ENCODE measurements at regions of chr20 and their contacts with region 1.

Region 1: DNA sequence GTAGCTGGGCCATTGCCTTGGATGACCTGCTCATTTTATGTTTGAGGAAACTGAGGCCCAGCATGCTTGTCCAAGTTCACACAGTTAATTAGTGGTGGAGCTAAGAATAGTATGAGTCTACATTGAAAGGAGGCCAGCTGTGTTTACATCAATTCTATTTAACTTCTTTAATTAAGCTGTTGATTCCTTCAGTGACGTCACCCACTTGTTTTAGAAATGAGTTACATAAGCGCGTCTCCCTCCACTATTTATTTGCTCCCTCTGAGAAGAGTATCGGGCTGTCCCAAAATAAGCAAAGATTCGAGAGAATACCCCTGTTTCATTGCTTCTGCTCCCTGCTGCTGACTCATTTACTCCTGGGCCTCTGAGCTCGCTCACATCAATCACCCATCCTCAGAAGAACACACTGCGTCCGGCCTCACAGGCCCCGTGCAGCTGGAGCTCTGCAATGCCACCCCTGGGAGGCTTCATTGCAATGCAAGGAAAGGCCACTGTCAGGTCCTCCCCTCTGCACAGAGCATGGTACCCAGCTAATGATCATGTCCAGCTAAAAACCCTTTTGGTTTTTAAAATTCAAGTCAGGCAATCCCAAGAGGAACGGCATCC is 74.8 kb upstream of the BMP2 start:
- DNase-seq: no peak
- H3K4me3 ChIP-seq: no peak overlapping the region
- H3K27ac ChIP-seq: no peak overlapping the region
- H3K27me3 ChIP-seq: no peaks in the 10 kb centered on the region
- CTCF ChIP-seq: no peak

Region 2: DNA sequence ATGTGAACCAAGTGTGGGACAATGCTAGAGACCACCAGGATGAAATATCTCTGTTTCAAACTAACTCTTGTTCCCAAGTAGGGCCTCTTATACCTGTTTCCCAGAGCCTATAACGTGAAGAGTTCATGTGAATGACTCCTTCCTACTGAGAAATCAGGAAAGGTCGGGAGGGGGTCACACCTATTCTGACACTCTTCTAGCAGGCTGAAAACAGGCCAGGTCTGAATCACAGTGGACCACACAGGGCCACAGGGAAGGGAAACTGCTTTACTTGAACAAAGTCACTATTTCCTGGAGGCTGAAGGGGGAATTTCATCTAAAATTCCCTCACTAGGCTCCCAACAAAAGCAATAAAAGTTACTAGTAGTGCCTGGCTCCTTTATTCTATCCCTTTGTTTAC is 13.6 kb before region 1 on chr20:
- CTCF ChIA-PET with region 1: no interaction called
- POLR2A ChIA-PET with region 1: no interaction called
- DNase-seq: no peak
- H3K4me3 ChIP-seq: no peak overlapping the region
- H3K27ac ChIP-seq: no peak overlapping the region
- H3K27me3 ChIP-seq: peaks cover 3% of the 10 kb centered on the region
- CTCF ChIP-seq: no peak

Region 3: GRCh38 chr20:6708010-6708409 is 15.3 kb after region 1 on chr20:
- CTCF ChIA-PET with region 1: interaction called, 10 read pairs
- POLR2A ChIA-PET with region 1: no interaction called
- DNase-seq: peak; percentile 67
- H3K4me3 ChIP-seq: no peak overlapping the region
- H3K27ac ChIP-seq: peak overlapping the region; percentile 53
- H3K27me3 ChIP-seq: no peaks in the 10 kb centered on the region
- CTCF ChIP-seq: no peak